Esophagus muscularis mucosa (tissue), 4 donors: ENCODE measurements at regions of chr19 and their contacts with region 1.

Region 1: GRCh38 chr19:37172368-37173366 is at the start of gene ZNF585A:
- DNase-seq: peak; percentile 97
- H3K4me3 ChIP-seq: peak within 1 kb of the TSS; percentile 52 to 82 (median 70)
- H3K27ac ChIP-seq: peak within 1 kb of the TSS; percentile 71 to 76 (median 74)
- H3K4me1 ChIP-seq: peaks cover 6 to 11% (median 8%) of the 10 kb centered on the region in 4 donors
- H3K27me3 ChIP-seq: no peaks in the 10 kb centered on the region
- CTCF ChIP-seq: peak; percentile 31 to 43 (median 31)
- EP300 ChIP-seq: no peak
- POLR2A ChIP-seq: no peak
- total RNA-seq, gene ZNF585A: 5.8 to 8.7 (median 6.8) TPM

Region 2: DNA sequence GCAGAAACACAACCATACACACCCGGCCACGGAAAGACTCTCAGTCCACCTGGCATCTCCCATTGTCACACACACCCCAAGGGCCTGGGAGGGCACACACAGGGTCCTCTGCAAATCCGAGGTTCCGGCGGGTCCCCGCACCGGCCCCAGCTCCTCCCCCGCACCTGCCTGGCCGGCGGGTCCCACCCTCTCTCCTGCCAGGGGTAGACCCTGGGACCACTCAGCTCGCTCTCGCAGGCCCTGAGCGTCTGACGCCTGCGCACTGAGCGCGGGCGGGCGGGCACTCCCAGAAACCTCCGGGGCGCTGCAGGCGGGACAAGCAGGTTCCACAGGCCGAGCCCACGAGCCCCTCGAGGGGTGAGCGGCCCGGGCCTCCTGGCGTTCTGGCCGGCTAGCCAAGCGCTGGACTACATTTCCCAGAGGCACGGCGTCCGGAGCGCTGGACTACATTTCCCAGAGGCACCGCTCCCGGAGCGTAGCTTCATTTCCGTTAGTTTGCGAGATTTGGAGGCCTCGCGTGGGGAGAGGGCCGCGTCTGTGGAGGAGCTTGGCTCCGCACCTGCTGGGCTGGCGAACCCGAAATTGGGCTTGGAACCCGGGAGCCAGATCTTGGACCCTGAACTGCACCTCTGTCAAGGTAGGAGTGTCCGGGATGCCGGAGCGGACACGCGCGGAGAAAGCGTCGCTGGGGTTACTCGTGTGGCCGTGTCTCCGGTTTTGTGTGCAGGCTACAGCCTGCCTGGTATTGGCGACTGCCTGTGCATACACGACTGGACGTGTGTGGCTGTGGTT is 94.5 kb before region 1 on chr19 and contains the start of gene ZNF420:
- intact Hi-C with region 1: loop called (anchors 10 kb)
- DNase-seq: peak; percentile 96
- H3K4me3 ChIP-seq: peak within 1 kb of the TSS; percentile 73 to 98 (median 80)
- H3K27ac ChIP-seq: peak within 1 kb of the TSS; percentile 85 to 96 (median 92)
- H3K4me1 ChIP-seq: peaks cover 12 to 27% (median 21%) of the 10 kb centered on the region in 4 donors
- H3K27me3 ChIP-seq: no peaks in the 10 kb centered on the region
- CTCF ChIP-seq: no peak
- EP300 ChIP-seq: no peak
- POLR2A ChIP-seq: no peak
- total RNA-seq, gene ZNF420: 8.5 to 19.1 (median 12.8) TPM

Region 3: GRCh38 chr19:37217855-37218591 is 45.4 kb after region 1 on chr19 and contains the start of gene ZNF383:
- intact Hi-C with region 1: loop called (anchors 5 kb)
- DNase-seq: peak; percentile 95
- H3K4me3 ChIP-seq: peak within 1 kb of the TSS; percentile 79 to 87 (median 84)
- H3K27ac ChIP-seq: peak within 1 kb of the TSS; percentile 86 to 92 (median 89)
- H3K4me1 ChIP-seq: peaks cover 16 to 27% (median 22%) of the 10 kb centered on the region in 4 donors
- H3K27me3 ChIP-seq: no peaks in the 10 kb centered on the region
- CTCF ChIP-seq: no peak
- EP300 ChIP-seq: no peak
- POLR2A ChIP-seq: no peak
- total RNA-seq, gene ZNF383: 9.3 to 11.6 (median 11.2) TPM

Region 4: DNA sequence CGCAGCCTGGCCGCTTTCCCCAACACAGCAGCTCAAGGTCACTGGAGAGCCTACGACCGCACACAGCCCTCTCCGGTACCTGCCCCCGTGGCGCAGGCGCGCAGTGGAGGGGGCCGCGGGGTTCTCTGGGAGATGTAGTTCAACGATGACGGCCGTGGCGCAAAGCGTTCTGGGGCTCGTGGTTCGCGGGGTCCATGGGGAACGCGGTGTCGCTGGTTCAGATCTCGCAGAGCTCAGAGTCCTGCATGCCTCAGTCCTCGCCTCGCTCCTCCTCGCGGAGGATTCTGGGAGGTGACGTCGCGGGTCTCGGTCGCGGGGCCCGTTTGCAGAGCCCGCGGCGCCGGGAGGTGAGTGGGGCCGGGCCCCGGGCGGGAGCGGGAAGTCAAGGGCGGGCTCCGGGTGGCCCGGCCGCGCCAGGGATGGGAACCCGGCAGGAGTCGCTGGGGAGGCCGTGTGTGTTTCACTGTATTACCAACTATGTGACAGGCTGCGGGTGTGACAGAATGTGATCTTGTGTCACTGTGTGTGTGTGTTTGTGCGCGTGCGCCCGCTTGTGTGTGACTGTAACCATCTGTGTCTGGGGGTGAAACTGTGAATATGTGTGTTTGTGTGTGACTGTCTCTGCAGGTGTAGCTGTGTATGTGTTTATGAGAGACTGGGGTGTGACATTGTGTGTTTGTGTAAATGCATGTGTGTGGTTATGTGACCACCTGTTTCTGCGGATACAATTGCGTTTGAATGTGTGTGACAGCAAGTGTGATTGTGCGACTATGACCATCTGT is 198.4 kb after region 1 on chr19 and contains the start of gene ZNF527:
- intact Hi-C with region 1: loop called (anchors 10 kb)
- DNase-seq: peak; percentile 99
- H3K4me3 ChIP-seq: peak within 1 kb of the TSS; percentile 69 to 82 (median 72)
- H3K27ac ChIP-seq: peak within 1 kb of the TSS; percentile 82 to 90 (median 88)
- H3K4me1 ChIP-seq: peaks cover 13 to 19% (median 17%) of the 10 kb centered on the region in 4 donors
- H3K27me3 ChIP-seq: no peaks in the 10 kb centered on the region
- CTCF ChIP-seq: peak in 1 of 3 experiments; percentile 7
- EP300 ChIP-seq: no peak
- POLR2A ChIP-seq: peak; percentile 59
- total RNA-seq, gene ZNF527: 4.5 to 8.8 (median 5.5) TPM